ENCODE measurements at regions of chr7 and their contacts with region 1.

Region 1: DNA sequence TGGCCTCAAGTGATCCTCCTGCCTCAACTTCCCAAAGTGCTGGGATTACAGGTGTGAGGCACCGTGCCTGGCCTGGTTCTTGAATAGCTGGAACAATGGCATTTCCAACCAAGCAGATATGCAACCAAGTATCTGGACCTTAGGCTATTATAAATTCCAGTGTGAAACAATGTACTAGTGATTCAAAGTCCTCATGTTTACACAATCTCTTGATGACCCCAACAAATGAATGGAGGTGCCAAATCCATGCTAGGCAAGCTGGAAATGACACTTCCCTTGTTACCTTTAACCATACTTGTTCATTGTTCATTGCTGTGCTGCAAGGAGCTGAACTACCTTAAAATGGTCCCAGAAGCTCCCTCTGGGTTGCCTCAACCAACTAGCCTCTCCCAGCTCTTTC is 282.2 kb upstream of the KLF14 start:
- DNase-seq: peak; percentile 31 to 95
- H3K4me3 ChIP-seq: 0 out of 2 replicates have a peak overlapping the region, but pooled peaks have one; percentile 8
- H3K27ac ChIP-seq: peak overlapping the region; percentile 73
- H3K4me1 ChIP-seq: peaks cover 76% of the 10 kb centered on the region
- H3K27me3 ChIP-seq: no peaks in the 10 kb centered on the region
- CTCF ChIP-seq: no peak

Region 2: GRCh38 chr7:130845581-130846085 is 170.6 kb before region 1 on chr7:
- CTCF ChIA-PET with region 1: no interaction called
- POLR2A ChIA-PET with region 1: interaction called, 11 read pairs
- intact Hi-C with region 1: no loop called
- DNase-seq: peak in 1 of 2 experiments; percentile 60
- H3K4me3 ChIP-seq: no peak overlapping the region
- H3K27ac ChIP-seq: no peak overlapping the region
- H3K4me1 ChIP-seq: peaks cover 8% of the 10 kb centered on the region; the same call in 1 of the 2 replicates
- H3K27me3 ChIP-seq: no peaks in the 10 kb centered on the region
- CTCF ChIP-seq: no peak

Region 3: DNA sequence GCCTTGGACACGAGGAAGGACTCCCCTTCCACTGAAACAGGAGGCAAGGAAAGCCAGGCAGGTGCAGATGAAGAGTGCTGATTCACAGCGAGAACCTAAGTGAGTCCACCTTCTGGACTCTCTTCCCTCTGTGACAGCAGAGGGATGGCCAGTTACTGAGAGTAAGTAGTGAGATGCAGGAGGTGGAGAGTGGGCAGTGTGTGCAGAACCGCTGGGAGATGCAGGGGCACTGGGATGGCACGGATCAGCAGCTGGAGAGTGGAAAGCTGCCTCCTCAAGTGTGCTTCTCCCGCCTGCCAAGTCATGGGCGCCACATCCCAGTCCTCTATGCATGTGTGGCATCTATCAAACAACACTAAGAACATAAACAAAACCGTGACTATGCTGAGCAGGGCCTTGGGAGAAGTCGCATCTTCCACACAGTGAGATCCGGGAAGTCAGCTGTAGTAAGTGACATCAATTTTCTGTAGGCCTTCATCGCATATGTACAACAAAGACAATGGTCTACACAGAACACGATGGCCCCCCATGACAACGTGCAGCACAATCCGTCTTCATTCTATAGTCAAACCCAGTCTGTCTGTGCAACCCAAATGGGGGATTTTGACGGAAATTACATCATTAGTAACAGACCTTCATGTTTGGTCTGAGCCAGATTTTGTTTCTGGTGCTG is 64.8 kb before region 1 on chr7:
- CTCF ChIA-PET with region 1: no interaction called
- POLR2A ChIA-PET with region 1: no interaction called
- intact Hi-C with region 1: no loop called
- DNase-seq: no peak
- H3K4me3 ChIP-seq: no peak overlapping the region
- H3K27ac ChIP-seq: no peak overlapping the region
- H3K4me1 ChIP-seq: peaks cover 15% of the 10 kb centered on the region; the same call in 1 of the 2 replicates
- H3K27me3 ChIP-seq: no peaks in the 10 kb centered on the region
- CTCF ChIP-seq: no peak